GM12878 (cell line): ENCODE measurements at regions of chr11 and their contacts with region 1.

Region 1: DNA sequence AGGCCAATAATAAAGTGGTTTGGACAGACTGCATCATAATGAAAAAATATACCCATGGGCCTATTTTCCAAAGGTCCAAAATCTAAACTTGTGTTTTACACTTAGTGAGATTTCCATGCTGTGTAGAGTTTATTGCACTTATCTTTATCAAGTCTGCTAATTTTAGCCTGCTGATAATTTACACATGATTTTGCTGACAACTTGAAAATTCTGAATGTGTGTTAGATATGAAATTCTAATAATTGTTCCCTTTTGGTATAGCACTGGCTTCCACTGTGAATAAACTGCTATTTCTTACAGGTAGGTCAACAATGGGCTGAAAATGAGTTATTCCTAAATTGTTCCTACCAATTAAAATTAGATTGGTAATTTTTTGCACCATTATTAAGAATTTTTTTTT is 589.1 kb upstream of the ANO3 start:
- DNase-seq: no peak
- ATAC-seq: no peak
- H3K4me3 ChIP-seq: no peak overlapping the region
- H3K27ac ChIP-seq: no peak overlapping the region
- H3K4me1 ChIP-seq: no peaks in the 10 kb centered on the region
- H3K27me3 ChIP-seq: no peaks in the 10 kb centered on the region
- CTCF ChIP-seq: no peak
- EP300 ChIP-seq: no peak
- POLR2A ChIP-seq: no peak
- RAD21 ChIP-seq: no peak

Region 2: DNA sequence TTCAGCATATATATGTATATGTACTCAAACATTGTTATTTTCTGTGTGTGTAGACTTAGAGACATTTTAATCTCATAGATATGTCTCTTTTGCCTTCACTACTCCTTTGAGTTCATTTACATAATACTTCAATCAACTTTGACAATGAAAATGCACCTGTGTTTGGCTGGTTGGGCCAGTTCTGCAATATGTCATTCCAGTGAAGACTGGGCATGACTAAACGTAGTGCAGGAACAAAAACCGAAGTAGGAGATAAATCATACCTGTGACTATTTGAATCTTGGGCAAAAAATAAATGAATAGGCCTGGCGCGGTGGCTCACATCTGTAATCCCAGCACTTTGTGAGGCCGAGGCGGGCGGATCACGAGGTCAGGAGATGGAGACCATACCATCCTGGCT is 50.8 kb before region 1 on chr11:
- CTCF ChIA-PET with region 1: no interaction called
- POLR2A ChIA-PET with region 1: no interaction called
- RAD21 ChIA-PET with region 1: no interaction called
- SMC1A ChIA-PET with region 1: no interaction called
- in situ Hi-C with region 1: no loop called
- intact Hi-C with region 1: loop called (anchors 10 kb)
- DNase-seq: no peak
- ATAC-seq: no peak
- H3K4me3 ChIP-seq: no peak overlapping the region
- H3K27ac ChIP-seq: no peak overlapping the region
- H3K4me1 ChIP-seq: no peaks in the 10 kb centered on the region
- H3K27me3 ChIP-seq: no peaks in the 10 kb centered on the region
- CTCF ChIP-seq: no peak
- EP300 ChIP-seq: no peak
- POLR2A ChIP-seq: no peak
- RAD21 ChIP-seq: no peak

Region 3: DNA sequence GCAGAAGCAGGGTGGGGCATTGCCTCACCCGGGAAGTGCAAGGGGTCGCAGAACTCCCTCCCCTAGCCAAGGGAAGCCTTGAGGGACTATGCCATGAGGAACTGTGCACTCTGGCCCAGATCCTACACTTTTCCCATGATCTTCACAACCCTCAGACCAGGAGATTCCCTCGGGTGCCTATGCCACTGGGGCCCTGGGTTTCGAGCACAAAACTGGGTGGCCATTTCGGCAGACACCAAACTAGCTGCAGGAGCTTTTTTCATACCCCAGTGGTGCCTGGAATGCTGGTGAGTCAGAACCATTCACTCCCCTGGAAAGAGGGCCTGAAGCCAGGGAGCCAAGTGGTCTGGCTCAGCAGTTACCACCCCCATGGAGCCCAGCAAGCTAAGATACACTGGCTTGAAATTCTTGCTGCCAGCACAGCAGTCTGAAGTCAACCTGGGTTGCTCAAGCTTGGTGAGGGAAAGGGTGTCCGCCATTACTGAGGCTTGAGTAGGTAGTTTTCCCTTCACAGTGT is 15.4 kb after region 1 on chr11:
- CTCF ChIA-PET with region 1: no interaction called
- POLR2A ChIA-PET with region 1: no interaction called
- RAD21 ChIA-PET with region 1: no interaction called
- SMC1A ChIA-PET with region 1: no interaction called
- in situ Hi-C with region 1: no loop called
- intact Hi-C with region 1: no loop called
- DNase-seq: no peak
- ATAC-seq: no peak
- H3K4me3 ChIP-seq: no peak overlapping the region
- H3K27ac ChIP-seq: no peak overlapping the region
- H3K4me1 ChIP-seq: no peaks in the 10 kb centered on the region
- H3K27me3 ChIP-seq: no peaks in the 10 kb centered on the region
- CTCF ChIP-seq: no peak
- EP300 ChIP-seq: no peak
- POLR2A ChIP-seq: no peak
- RAD21 ChIP-seq: no peak

Region 4: GRCh38 chr11:25961539-25961938 is 218.7 kb after region 1 on chr11:
- CTCF ChIA-PET with region 1: no interaction called
- POLR2A ChIA-PET with region 1: no interaction called
- RAD21 ChIA-PET with region 1: no interaction called
- SMC1A ChIA-PET with region 1: no interaction called
- in situ Hi-C with region 1: no loop called
- intact Hi-C with region 1: no loop called
- DNase-seq: no peak
- ATAC-seq: no peak
- H3K4me3 ChIP-seq: no peak overlapping the region
- H3K27ac ChIP-seq: no peak overlapping the region
- H3K4me1 ChIP-seq: no peaks in the 10 kb centered on the region
- H3K27me3 ChIP-seq: no peaks in the 10 kb centered on the region
- CTCF ChIP-seq: no peak
- EP300 ChIP-seq: no peak
- POLR2A ChIP-seq: no peak
- RAD21 ChIP-seq: no peak